ENCODE measurements at regions of chr5 and their contacts with region 1.

Region 1: DNA sequence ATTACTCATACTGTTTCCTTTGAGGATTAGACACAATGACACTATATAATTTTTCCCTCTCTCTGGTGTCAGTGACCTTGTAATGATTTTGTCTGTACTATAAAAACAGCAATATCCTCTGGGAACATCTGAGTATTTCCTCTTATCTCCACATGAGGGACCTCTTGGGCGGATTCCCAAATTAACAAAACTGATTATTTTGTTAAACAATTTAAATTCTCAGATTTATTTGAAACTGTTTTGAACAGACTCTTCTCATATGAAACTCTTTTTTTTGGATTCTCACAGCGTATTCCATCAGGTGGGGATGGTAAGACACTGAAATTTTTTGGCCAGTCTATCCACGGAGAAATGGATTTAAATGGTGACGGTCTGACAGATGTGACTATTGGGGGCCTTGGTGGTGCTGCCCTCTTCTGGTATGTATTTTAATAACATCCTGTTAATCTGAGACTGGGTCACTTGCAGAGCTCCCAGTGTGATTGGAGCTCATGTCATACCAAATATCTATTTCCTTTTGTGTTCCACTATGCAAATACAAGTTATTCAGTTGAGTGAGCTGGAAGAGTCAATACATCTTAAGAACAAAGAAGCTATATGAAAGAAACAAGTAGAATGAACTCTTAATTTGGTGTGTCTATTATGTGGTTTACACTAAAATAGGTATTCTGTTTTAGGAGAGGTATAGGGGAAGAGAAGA is 73.8 kb upstream of the ITGA2 start:
- DNase-seq: peak; percentile 50
- H3K4me3 ChIP-seq: peak overlapping the region; percentile 30
- H3K27ac ChIP-seq: no peak overlapping the region
- H3K27me3 ChIP-seq: no peaks in the 10 kb centered on the region
- CTCF ChIP-seq: peak; percentile 61

Region 2: DNA sequence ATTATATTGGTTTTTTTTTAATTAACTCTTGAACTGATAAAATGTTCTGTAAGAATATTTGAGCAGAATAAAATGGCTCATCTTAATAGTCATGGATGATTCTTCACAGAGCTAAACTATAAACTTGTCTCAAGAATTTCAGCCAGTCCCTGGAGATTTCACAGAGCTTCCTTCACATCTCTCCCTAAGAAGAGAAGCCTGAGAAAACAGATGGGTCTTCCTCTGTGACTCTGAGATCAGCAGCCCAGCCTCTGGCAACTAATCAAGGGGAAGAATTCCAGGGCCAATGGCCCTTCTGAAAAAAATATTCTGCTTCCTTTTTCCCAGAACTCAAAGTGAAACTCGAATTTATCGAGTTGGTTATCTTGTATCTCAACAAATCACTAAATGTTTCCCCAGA is 249.8 kb before region 1 on chr5:
- CTCF ChIA-PET with region 1: interaction called, 16 read pairs
- POLR2A ChIA-PET with region 1: no interaction called
- DNase-seq: no peak
- H3K4me3 ChIP-seq: no peak overlapping the region
- H3K27ac ChIP-seq: no peak overlapping the region
- H3K27me3 ChIP-seq: peaks cover 6% of the 10 kb centered on the region
- CTCF ChIP-seq: no peak

Region 3: DNA sequence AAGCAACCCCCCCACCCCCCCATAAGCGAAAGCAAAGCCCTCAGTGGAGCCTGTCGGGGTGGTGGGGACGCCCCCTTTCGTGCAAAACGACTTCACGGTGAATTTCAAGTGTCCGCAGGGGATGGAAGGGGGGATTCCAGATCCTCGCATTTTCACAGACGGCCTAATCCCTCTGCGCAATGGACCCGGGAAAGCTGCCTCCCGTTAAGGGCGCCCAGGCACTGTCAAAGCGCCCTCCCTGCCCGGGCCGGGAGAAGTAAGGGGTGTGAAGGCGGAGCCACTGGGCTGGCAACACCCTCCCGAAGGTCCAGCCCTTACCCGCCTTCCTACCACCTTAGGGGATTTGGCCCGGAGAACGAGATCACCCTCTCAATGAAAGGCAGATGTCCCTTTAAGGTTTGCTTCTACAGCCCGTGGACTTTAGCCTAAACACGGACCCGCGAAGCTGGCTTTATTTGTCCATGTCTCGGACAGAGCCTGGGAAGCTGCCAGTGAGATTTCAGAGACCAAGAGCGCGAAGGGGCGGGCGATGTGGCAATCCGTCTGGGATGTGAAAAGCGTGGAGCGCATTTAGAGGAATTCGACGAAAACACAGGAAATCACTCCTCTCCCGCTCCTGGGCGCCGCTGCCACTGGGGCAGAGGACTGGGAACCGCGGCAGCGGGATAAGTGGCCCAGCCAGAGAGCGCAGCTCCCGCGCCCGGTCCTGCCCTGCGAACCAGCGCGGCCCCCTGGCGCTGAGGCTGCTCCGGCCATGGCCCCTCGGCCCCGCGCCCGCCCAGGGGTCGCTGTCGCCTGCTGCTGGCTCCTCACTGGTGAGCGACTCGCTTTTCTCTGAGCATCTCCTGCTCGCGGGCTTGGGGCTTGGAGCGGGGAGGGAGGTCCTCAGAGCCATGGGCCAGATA is 127.5 kb before region 1 on chr5 and contains the starts of genes ITGA1 and PELO:
- CTCF ChIA-PET with region 1: interaction called, 13 read pairs
- POLR2A ChIA-PET with region 1: no interaction called
- DNase-seq: peak; percentile 59
- H3K4me3 ChIP-seq: peak within 1 kb of the TSS; percentile 77
- H3K27ac ChIP-seq: peak within 1 kb of the TSS; percentile 72
- H3K27me3 ChIP-seq: no peaks in the 10 kb centered on the region
- CTCF ChIP-seq: peak; percentile 28
- polyA plus RNA-seq, gene ITGA1: 136 and 148 TPM in 2 replicates
- polyA plus RNA-seq, gene PELO: 49.4 TPM in 2 replicates

Region 4: GRCh38 chr5:52995914-52996313 is 80.6 kb after region 1 on chr5:
- CTCF ChIA-PET with region 1: no interaction called
- POLR2A ChIA-PET with region 1: no interaction called
- DNase-seq: no peak
- H3K4me3 ChIP-seq: no peak overlapping the region
- H3K27ac ChIP-seq: no peak overlapping the region
- H3K27me3 ChIP-seq: no peaks in the 10 kb centered on the region
- CTCF ChIP-seq: no peak

Region 5: GRCh38 chr5:53362521-53362941 is 447.2 kb after region 1 on chr5:
- CTCF ChIA-PET with region 1: no interaction called
- POLR2A ChIA-PET with region 1: no interaction called
- DNase-seq: peak; percentile 77
- H3K4me3 ChIP-seq: no peak overlapping the region
- H3K27ac ChIP-seq: peak overlapping the region; percentile 74
- H3K27me3 ChIP-seq: no peaks in the 10 kb centered on the region
- CTCF ChIP-seq: no peak

Measured in AG04450 (cell line).